Vagina (tissue), 2 donors: ENCODE measurements at regions of chr1 and their contacts with region 1.

Region 1: GRCh38 chr1:2586154-2587070 is at the start of gene PRXL2B:
- DNase-seq: peak in 1 of 2 donors; percentile 99
- H3K4me3 ChIP-seq: peak within 1 kb of the TSS; percentile 67 to 78
- H3K27ac ChIP-seq: peak within 1 kb of the TSS; percentile 94
- H3K4me1 ChIP-seq: peaks cover 37% of the 10 kb centered on the region
- H3K27me3 ChIP-seq: no peaks in the 10 kb centered on the region
- CTCF ChIP-seq: no peak
- POLR2A ChIP-seq: peak in 1 of 2 donors; percentile 95
- total RNA-seq, gene PRXL2B: 16.2 TPM

Region 2: DNA sequence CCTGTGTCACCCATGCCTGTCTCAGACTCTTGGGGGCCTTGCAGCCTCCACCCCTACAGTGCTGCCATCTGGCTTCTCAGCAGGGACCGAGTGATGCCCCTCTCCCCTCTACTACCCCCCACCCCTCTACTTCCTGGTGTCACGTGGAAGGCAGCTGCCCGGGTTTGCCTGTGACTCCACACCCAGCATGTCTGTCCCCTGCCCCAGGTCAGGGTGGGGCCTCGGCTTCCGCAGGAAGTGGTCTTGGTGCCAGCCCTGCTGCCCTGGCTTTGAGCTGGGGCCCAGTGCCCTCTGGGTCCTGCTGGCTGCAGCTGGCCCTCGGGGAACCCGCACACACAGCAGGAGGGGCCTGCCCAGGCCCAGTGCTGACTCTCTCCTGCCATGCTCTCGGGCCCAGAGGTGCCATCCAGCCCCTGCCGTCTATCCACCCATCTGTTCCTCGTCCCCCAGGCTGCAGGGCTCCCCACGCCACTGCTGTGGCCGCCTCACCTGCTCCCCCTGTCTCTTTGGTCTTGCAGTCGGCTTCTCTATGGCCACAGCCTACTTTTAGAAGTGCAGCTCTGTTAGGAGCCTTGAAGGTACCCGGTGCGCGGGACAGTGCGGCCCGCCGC is 86.3 kb before region 1 on chr1:
- intact Hi-C with region 1: no loop called
- DNase-seq: no peak
- H3K4me3 ChIP-seq: no peak overlapping the region
- H3K27ac ChIP-seq: no peak overlapping the region
- H3K4me1 ChIP-seq: peaks cover 26% of the 10 kb centered on the region
- H3K27me3 ChIP-seq: no peaks in the 10 kb centered on the region
- CTCF ChIP-seq: no peak
- POLR2A ChIP-seq: no peak

Region 3: GRCh38 chr1:2545759-2546514 is 40.5 kb before region 1 on chr1:
- intact Hi-C with region 1: loop called (anchors 5 kb)
- DNase-seq: peak in 1 of 2 donors; percentile 95
- H3K4me3 ChIP-seq: peak overlapping the region; percentile 47 to 53
- H3K27ac ChIP-seq: peak overlapping the region; percentile 92
- H3K4me1 ChIP-seq: peaks cover 62% of the 10 kb centered on the region
- H3K27me3 ChIP-seq: no peaks in the 10 kb centered on the region
- CTCF ChIP-seq: no peak
- POLR2A ChIP-seq: no peak

Region 4: GRCh38 chr1:2575801-2576663 is 10.4 kb before region 1 on chr1:
- intact Hi-C with region 1: no loop called
- DNase-seq: no peak
- H3K4me3 ChIP-seq: no peak overlapping the region
- H3K27ac ChIP-seq: no peak overlapping the region
- H3K4me1 ChIP-seq: peaks cover 9% of the 10 kb centered on the region
- H3K27me3 ChIP-seq: no peaks in the 10 kb centered on the region
- CTCF ChIP-seq: no peak
- POLR2A ChIP-seq: no peak